PC-3 (cell line): ENCODE measurements at regions of chr3 and their contacts with region 1.

Region 1: GRCh38 chr3:62558549-62559112 is 185.3 kb upstream of the FEZF2 start:
- DNase-seq: peak; percentile 24
- ATAC-seq: peak; percentile 53; the same call in 1 of the 2 replicates
- H3K4me3 ChIP-seq: no peak overlapping the region
- H3K27ac ChIP-seq: no peak overlapping the region
- H3K4me1 ChIP-seq: no peaks in the 10 kb centered on the region
- H3K27me3 ChIP-seq: no peaks in the 10 kb centered on the region
- CTCF ChIP-seq: peak; percentile 60

Region 2: DNA sequence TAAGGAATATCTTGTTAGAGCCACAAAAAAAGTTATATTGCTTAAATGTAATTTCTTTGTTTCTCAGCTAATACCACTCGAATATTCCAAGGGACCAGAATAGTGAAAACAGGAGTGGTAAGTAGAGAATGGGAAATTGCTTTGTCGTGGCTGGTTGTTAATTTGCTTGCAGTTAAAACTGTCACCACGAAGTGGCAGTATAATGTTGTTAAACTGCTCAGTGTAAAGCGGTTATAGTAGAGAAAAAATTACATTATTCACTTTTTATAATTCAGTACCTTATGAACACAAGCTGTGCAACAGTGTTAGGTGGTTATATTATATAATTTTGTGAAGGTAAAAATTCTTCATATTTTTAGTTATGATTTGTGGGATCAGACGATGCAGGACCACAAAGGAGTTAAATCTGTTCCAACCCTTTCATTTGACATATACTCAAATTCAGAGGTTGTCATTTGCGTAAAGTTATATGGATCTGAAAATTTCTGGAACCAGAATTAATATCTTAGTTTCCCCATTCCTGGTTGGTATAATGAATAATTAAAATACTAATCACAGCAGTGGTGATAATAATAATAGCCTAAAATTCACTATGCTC is 357.1 kb before region 1 on chr3:
- CTCF ChIA-PET with region 1: interaction called, 3 read pairs
- POLR2A ChIA-PET with region 1: no interaction called
- intact Hi-C with region 1: loop called (anchors 1 kb)
- DNase-seq: peak; percentile 56
- ATAC-seq: peak; percentile 81
- H3K4me3 ChIP-seq: no peak overlapping the region
- H3K27ac ChIP-seq: no peak overlapping the region
- H3K4me1 ChIP-seq: no peaks in the 10 kb centered on the region
- H3K27me3 ChIP-seq: no peaks in the 10 kb centered on the region
- CTCF ChIP-seq: peak; percentile 72

Region 3: GRCh38 chr3:62332835-62333244 is 225.8 kb before region 1 on chr3:
- CTCF ChIA-PET with region 1: no interaction called
- POLR2A ChIA-PET with region 1: no interaction called
- intact Hi-C with region 1: loop called (anchors 1 kb)
- DNase-seq: peak; percentile 47
- ATAC-seq: no peak
- H3K4me3 ChIP-seq: no peak overlapping the region
- H3K27ac ChIP-seq: no peak overlapping the region
- H3K4me1 ChIP-seq: no peaks in the 10 kb centered on the region
- H3K27me3 ChIP-seq: no peaks in the 10 kb centered on the region
- CTCF ChIP-seq: peak; percentile 73

Region 4: DNA sequence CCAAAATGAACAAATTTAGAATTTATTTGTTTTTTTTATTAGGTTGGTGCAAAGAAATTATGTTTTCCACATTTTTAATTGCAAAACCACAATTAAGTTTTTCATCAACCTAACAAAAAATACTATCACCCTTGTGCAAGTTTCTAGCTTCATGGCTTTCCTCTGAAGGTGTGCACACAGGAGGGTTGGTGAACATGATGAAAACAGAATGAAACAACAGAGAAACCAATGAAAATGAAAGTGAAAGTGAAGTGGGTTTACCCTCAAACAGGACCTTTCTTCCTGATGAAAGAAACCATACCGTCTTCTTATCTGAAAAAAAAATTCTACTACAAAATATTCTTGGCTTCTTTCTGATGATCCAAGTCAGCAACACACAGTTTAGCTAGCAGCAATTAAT is 113.4 kb before region 1 on chr3:
- CTCF ChIA-PET with region 1: no interaction called
- POLR2A ChIA-PET with region 1: no interaction called
- intact Hi-C with region 1: no loop called
- DNase-seq: no peak
- ATAC-seq: no peak; the same call in 1 of the 2 replicates
- H3K4me3 ChIP-seq: peak overlapping the region; percentile 56
- H3K27ac ChIP-seq: no peak overlapping the region
- H3K4me1 ChIP-seq: no peaks in the 10 kb centered on the region
- H3K27me3 ChIP-seq: peaks cover 12% of the 10 kb centered on the region; the same call in 1 of the 2 replicates
- CTCF ChIP-seq: no peak

Region 5: DNA sequence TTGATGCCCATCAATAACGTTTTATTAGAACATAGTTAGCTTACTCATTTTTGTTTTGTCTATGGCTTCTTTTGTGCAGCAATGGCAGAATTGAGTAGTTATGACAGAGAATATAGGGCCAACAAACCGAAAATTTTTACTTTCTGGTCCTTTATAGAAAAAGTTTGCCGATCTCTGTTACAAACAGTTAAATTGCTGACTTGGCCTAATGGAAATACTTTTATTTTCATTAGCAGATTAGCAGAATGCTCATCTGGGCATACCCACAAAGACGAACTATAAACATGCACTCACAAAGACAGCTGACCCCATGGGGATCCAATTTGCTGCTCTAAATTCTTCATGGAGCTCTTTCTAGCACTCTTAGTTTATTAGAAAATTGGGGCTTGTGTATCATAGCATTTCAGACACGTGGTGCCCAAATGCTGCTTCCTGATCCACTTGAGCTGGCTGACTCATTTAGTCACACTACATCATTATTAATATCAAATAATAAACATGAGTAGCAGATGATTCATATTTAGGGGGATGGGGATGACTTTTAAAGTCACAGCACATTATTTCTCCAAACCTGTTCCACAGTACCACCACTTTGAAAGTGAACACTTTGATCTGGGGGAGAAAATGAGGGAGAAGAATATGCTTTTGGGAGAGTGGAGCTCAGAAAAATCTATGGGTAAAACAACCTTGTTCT is 42.8 kb after region 1 on chr3:
- CTCF ChIA-PET with region 1: interaction called, 3 read pairs
- POLR2A ChIA-PET with region 1: no interaction called
- intact Hi-C with region 1: loop called (anchors 5 kb)
- DNase-seq: peak; percentile 75
- ATAC-seq: peak; percentile 62
- H3K4me3 ChIP-seq: no peak overlapping the region
- H3K27ac ChIP-seq: peak overlapping the region; percentile 45
- H3K4me1 ChIP-seq: peaks cover 41% of the 10 kb centered on the region
- H3K27me3 ChIP-seq: no peaks in the 10 kb centered on the region
- CTCF ChIP-seq: no peak